Transverse colon (tissue), 4 donors: ENCODE measurements at regions of chr2 and their contacts with region 1.

Region 1: DNA sequence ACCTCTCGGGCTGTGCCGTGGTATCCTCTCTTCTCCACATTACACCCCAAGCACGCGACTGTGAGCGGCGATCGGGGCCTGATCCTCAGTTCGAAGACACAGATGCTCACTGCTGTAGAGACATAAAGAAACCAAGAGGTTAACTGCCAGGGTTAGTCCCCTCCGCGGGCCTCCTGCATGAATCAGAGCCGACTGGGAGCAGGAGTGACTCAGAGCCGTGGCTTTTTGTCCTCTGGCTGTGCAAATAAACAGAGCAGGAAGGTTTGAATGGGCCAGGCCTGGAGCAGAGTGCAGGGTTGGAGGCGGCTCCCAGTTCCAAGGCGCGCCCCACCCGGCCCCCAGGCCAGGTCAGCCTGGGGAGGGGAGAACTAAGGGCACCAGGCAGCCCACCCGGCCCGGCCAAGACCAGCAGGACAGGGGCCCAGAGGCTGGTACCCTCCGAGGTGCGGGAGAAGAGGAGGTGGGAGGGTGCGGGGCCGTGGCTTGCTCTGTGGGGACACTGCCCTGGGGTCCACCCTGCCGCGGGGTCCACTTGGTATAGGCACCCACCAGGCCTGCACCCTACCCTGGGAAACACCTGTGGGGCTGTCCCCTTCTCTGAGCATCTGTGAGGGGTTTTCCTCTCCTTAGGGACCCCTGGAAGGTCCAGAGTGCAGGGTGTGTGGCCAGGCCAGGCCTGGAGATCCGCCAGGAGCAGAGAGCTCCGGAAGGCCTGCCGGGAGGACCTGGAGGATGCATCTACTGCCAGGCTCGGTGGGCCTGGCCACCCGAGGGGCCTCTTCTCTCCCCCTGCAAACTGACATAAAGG is 16.5 kb downstream of the TWIST2 start:
- DNase-seq: peak; percentile 89
- H3K4me3 ChIP-seq: peak overlapping the region in 1 of 4 donors; percentile 28
- H3K27ac ChIP-seq: peak overlapping the region; percentile 81 to 88 (median 86)
- H3K4me1 ChIP-seq: peaks cover 29 to 48% (median 38%) of the 10 kb centered on the region in 4 donors
- H3K27me3 ChIP-seq: no peaks in the 10 kb centered on the region
- CTCF ChIP-seq: no peak
- EP300 ChIP-seq: no peak
- POLR2A ChIP-seq: no peak

Region 2: DNA sequence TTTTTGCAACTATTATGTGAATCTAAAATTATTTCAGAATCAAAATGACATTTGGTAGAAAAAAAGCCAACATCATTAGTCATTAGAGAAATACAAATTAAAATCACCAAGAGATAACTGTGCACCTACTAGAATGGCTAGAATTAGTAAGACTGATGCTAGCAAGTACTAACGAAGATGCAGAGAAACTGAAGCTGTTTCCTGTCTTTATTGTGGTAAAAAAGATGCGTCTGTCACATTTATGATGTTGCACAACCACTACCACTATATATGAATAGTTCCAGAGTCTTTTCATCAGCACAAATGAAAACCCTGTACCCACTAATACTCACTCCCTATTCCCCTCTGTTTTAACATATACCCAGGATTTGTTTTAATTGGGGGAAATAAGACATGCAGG is 33.2 kb before region 1 on chr2:
- in situ Hi-C with region 1: no loop called
- intact Hi-C with region 1: loop called (anchors 2 kb)
- DNase-seq: no peak
- H3K4me3 ChIP-seq: no peak overlapping the region
- H3K27ac ChIP-seq: no peak overlapping the region
- H3K4me1 ChIP-seq: no peaks in the 10 kb centered on the region
- H3K27me3 ChIP-seq: no peaks in the 10 kb centered on the region
- CTCF ChIP-seq: no peak
- EP300 ChIP-seq: no peak
- POLR2A ChIP-seq: no peak

Region 3: GRCh38 chr2:239293775-239294430 is 429.5 kb after region 1 on chr2:
- in situ Hi-C with region 1: no loop called
- intact Hi-C with region 1: no loop called
- DNase-seq: peak; percentile 13
- H3K4me3 ChIP-seq: no peak overlapping the region
- H3K27ac ChIP-seq: peak overlapping the region; percentile 70 to 80 (median 75)
- H3K4me1 ChIP-seq: peaks cover 44 to 91% (median 75%) of the 10 kb centered on the region in 4 donors
- H3K27me3 ChIP-seq: no peaks in the 10 kb centered on the region
- CTCF ChIP-seq: no peak
- EP300 ChIP-seq: no peak
- POLR2A ChIP-seq: no peak